ENCODE measurements at regions of chr6 and their contacts with region 1.

Region 1: GRCh38 chr6:162442687-162443086 is 284.9 kb downstream of the PRKN start:
- DNase-seq: no peak
- ATAC-seq: peak; percentile 65 to 77

Region 2: GRCh38 chr6:162131768-162132167 is 310.9 kb before region 1 on chr6:
- intact Hi-C with region 1: no loop called
- DNase-seq: no peak
- ATAC-seq: no peak

Region 3: DNA sequence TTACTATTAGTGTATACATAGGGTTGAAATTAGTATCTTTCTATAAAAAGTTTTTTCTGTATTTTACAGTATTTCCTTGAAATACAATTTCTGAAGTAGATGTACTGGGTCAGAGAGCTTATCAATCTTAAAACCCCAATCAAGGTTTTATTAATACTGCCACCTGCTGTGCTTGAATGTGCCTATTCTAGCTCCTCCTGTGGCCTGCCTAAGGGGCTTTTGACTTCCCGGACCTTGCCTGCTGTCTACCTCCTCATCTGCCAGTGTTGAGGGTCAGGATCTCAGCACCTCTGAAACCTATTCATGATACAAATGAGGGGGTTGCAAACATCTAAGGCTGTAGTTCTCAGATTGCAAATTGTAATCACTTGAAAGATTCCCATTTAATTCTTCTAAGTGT is 294.3 kb after region 1 on chr6:
- intact Hi-C with region 1: loop called in 1 of 2 experiments (anchors 5 kb)
- DNase-seq: no peak
- ATAC-seq: no peak

Measured in left cardiac atrium (tissue), 4 donors.